ENCODE measurements at regions of chr4 and their contacts with region 1.

Region 1: GRCh38 chr4:76949276-76950051 is at the start of gene SEPTIN11:
- DNase-seq: peak; percentile 94
- total RNA-seq, gene SEPTIN11: 41.5 TPM

Region 2: DNA sequence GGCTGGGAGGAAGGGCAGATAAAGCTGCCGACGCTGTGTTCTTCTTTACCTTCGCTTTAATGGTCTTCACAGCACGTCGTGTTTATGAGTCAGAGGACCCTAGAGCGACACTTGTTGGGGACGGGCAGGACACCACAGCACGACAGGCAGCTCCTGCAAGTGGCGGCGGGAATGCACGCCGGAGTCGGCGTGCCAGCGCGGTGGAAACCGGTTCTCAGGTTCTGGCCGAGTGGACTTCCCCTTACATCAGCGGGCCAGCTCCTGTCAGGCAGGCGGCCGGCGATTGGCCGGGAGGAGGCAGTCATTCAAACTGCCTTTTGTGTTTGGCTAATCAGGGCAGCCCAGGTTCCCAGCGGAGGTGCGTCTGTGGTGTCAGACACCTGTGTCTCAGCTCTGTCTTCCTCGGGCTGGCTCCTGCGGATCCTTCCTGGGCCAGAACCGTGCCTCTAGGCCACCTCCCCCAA is 363.5 kb before region 1 on chr4:
- intact Hi-C with region 1: loop called (anchors 10 kb)
- DNase-seq: peak; percentile 88

Region 3: GRCh38 chr4:76803522-76803921 is 145.9 kb before region 1 on chr4:
- intact Hi-C with region 1: loop called (anchors 5 kb)
- DNase-seq: no peak

Region 4: DNA sequence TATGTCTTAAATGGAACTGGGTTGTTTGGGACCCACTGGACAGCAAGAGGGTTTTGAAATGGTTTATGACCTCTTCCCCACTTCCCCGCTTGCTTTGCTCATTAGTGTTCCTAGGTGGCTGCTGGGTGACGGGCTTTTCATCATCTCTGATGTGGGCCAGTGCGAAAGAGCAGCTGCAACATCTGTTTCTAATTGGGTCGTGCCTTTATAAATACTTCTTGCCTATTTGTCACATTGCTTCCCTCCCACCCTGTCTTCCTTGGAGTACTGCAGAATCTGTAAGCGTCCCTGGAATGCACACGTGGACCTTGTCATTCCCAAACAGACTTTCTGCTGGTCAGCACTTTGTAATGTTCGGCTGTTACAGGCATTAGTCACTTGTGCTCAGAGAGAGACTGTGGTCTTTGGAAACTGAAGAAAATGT is 35.3 kb after region 1 on chr4:
- intact Hi-C with region 1: loop called (anchors 5 kb)
- DNase-seq: no peak

Region 5: GRCh38 chr4:77040854-77041725 is 91.6 kb after region 1 on chr4:
- intact Hi-C with region 1: no loop called
- DNase-seq: no peak

Region 6: DNA sequence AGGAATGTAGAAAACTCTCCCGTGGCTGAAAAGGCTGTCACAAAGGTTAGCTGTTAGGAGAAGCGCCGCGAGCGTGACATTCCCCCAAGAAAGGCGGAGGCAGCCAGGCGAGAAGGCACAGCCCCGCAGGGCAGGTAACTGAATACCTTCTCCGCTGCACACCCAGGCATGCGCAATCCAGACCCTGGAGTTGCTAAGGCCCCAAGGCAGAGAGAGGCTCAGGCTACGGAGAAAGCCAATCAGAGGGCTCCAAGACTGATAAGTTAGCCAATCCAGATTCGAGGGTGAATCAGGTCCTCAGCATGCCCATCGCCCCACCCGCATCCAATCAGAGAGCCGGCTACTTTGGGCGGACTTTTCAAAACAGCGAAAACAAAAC is 207.1 kb after region 1 on chr4:
- intact Hi-C with region 1: loop called (anchors 5 kb)
- DNase-seq: peak; percentile 97